A673 (cell line): ENCODE measurements at regions of chr19 and their contacts with region 1.

Region 1: GRCh38 chr19:47243776-47244547 is 12.4 kb upstream of the CCDC9 start:
- DNase-seq: peak; percentile 97
- H3K4me3 ChIP-seq: peak overlapping the region; percentile 50
- H3K27ac ChIP-seq: peak overlapping the region; percentile 91
- H3K4me1 ChIP-seq: peaks cover 15% of the 10 kb centered on the region
- H3K27me3 ChIP-seq: peaks cover 13% of the 10 kb centered on the region
- CTCF ChIP-seq: peak; percentile 97

Region 2: GRCh38 chr19:47013041-47013517 is 230.9 kb before region 1 on chr19:
- CTCF ChIA-PET with region 1: interaction called, 15 read pairs
- POLR2A ChIA-PET with region 1: no interaction called
- intact Hi-C with region 1: no loop called
- DNase-seq: peak; percentile 86
- H3K4me3 ChIP-seq: no peak overlapping the region
- H3K27ac ChIP-seq: no peak overlapping the region
- H3K4me1 ChIP-seq: no peaks in the 10 kb centered on the region
- H3K27me3 ChIP-seq: no peaks in the 10 kb centered on the region
- CTCF ChIP-seq: peak; percentile 99

Region 3: DNA sequence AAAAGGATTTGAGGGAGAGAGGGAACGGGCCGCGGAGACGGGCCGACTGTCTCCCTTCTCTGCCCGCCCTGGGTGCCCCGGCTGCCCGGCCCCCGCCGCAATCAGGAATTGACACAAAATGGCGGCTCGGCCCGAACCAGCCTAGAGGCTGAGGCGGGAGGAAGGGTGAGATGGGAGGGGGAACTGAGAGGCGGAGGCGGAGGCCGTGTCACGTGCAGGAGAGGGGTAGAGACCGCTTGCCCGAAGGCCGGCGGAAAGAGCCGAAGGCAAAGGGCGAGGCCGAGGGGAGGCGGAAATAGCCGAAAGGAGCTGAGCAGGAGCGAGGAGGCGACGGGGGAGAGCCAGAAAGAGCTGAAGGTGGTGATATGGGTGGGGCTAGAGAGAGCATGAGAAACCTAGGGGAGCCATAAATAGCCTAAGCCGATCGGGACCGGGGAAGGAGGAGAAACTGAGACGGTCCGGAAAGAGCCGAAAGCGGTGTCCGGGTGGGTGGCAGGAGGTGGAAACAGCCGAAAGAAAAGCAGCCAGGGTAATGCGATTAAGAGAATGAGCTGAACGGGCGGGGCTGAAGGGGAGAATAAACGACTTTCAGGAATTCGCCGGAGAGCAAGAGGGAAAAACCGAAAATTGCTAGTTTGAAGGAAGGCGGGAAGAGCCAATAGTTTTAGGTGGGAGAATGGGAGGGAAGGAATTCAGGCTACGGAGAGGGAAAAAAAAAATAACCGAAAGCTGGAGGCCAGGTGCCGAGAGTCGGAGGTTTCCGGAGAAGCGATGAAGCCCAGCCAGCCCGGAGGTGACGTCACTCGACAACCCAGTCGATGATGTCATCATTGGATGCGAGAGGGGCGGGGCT is 130.7 kb before region 1 on chr19 and contains the start of gene ZC3H4:
- CTCF ChIA-PET with region 1: no interaction called
- POLR2A ChIA-PET with region 1: no interaction called
- intact Hi-C with region 1: no loop called
- DNase-seq: peak; percentile 100
- H3K4me3 ChIP-seq: peak within 1 kb of the TSS; percentile 96
- H3K27ac ChIP-seq: peak within 1 kb of the TSS; percentile 100
- H3K4me1 ChIP-seq: peaks cover 25% of the 10 kb centered on the region
- H3K27me3 ChIP-seq: no peaks in the 10 kb centered on the region
- CTCF ChIP-seq: no peak
- total RNA-seq, gene ZC3H4: 94.4 and 94.8 TPM in 2 replicates

Region 4: GRCh38 chr19:47152224-47153017 is 91.5 kb before region 1 on chr19:
- CTCF ChIA-PET with region 1: interaction called, 18 read pairs
- POLR2A ChIA-PET with region 1: no interaction called
- intact Hi-C with region 1: loop called (anchors 10 kb)
- DNase-seq: no peak
- H3K4me3 ChIP-seq: no peak overlapping the region
- H3K27ac ChIP-seq: no peak overlapping the region
- H3K4me1 ChIP-seq: peaks cover 6% of the 10 kb centered on the region
- H3K27me3 ChIP-seq: no peaks in the 10 kb centered on the region
- CTCF ChIP-seq: no peak

Region 5: DNA sequence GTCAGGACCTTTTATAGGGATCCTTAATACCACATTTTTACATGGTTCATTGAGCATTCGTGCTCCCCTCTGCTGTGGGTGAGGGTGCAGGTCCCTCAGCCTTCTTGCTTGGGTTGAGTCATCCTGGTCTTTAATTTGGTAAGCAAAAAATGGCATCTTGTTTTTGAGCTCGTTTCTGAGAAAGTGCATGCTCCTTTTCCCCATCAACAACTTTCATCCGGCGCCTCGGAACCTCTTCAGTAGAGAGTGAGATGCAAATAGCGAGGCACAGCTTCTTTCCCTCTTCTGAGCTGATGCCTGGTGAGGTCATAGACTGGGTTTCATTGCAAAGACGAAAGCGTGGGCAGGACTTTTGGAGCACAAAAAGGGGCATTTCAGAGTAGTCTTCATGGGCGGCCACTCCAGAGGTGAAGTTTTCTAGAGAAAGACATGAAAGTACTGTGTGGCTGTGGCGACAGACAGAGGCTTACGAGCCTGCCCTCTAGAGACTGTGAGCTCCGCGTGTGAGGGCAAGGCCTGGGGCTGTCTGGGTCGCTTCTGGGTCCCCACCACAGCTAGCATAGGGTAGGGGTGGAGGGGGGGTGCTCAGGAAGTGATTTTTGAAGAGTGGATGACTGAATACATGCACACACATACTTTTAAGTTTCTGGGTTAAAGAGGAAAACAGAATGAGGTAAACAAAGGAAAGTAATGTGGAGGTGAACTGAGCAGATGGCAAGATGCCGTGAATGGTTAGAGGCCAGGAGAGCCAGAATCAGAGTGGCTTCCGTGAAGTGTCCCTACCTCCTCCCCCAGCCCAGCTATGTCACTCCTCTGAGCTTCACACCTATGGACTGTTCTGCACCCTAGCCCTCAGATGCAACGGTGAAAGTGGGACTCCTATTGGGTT is 57.3 kb before region 1 on chr19:
- CTCF ChIA-PET with region 1: interaction called, 3 read pairs
- POLR2A ChIA-PET with region 1: interaction called, 10 read pairs
- intact Hi-C with region 1: no loop called
- DNase-seq: no peak
- H3K4me3 ChIP-seq: no peak overlapping the region
- H3K27ac ChIP-seq: peak overlapping the region; percentile 30
- H3K4me1 ChIP-seq: no peaks in the 10 kb centered on the region
- H3K27me3 ChIP-seq: no peaks in the 10 kb centered on the region
- CTCF ChIP-seq: no peak

Region 6: DNA sequence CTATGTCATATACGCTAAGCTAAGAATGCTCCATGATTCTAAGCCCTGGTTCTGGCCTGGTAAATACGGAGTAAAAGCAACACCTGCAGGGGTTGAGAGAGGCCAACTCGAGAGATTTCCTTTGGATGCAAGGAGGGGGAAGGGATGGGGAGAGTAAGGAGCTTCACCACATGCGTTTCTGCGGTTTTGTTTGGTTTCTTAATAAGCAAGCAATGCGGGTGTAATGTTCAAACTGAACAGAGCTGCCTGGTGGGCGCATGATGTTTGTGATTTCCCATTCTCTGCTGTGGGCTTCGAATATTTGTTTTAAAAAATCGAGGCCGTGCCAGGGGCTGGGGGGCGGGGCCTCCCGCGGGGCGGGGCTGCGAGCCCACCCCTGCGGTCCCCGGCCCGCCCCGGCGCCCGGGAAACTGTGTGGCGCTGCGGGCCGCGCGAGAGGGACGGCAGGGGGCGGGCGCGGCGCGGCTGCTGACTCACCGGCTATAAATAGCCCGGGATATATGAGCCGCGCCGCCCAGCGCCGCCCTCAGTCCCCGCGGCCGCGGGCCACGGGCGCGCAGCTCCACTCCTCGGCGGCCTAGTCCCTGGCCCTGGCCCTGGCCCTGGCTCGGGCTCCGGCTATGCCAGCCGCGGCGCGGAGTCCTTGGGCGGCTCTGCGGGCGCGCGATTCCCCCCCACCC is 18.1 kb before region 1 on chr19:
- CTCF ChIA-PET with region 1: interaction called, 28 read pairs
- POLR2A ChIA-PET with region 1: interaction called, 7 read pairs
- intact Hi-C with region 1: no loop called
- DNase-seq: peak; percentile 94
- H3K4me3 ChIP-seq: peak overlapping the region; percentile 52
- H3K27ac ChIP-seq: peak overlapping the region; percentile 95
- H3K4me1 ChIP-seq: peaks cover 21% of the 10 kb centered on the region
- H3K27me3 ChIP-seq: no peaks in the 10 kb centered on the region
- CTCF ChIP-seq: no peak

Region 7: DNA sequence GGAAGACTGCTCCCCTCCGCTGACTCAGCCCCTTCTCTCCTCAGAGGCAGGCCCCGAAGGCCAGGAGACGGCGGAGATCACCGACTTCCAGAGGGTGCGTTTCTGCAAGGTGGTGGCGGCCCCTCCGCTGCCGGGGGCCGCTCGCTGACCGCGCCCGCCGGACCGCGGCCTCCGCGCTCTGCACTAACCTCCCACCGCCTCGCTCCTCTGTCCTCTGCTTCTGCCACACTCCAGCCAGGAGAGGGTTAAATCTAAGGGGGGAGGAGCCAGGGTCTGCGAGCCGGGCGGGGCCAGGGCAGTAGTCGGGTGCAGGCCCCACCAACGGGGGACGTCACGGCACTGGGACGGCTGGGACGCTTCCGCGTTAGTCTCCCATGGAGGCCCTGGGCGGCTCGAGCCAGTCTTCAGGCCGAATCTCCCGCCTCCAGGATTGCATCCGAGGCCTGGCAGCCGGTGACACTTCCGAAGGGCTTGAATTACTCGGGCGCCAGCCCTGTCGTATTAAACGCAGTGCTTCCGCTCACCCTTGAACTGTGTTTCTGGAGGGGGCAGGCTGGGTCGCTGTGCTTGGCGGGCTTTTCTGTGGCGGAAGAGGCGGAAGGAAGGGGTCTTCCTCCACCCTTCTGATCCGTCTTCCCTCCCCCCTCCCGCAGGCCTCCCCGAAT is 29.5 kb after region 1 on chr19:
- CTCF ChIA-PET with region 1: no interaction called
- POLR2A ChIA-PET with region 1: interaction called, 20 read pairs
- intact Hi-C with region 1: no loop called
- DNase-seq: peak; percentile 96
- H3K4me3 ChIP-seq: peak overlapping the region; percentile 65
- H3K27ac ChIP-seq: peak overlapping the region; percentile 99
- H3K4me1 ChIP-seq: peaks cover 17% of the 10 kb centered on the region
- H3K27me3 ChIP-seq: no peaks in the 10 kb centered on the region
- CTCF ChIP-seq: no peak